WTC11 (cell line): ENCODE measurements at regions of chr12 and their contacts with region 1.

Region 1: GRCh38 chr12:118376089-118377020 is at the start of gene SUDS3:
- DNase-seq: peak; percentile 97
- ATAC-seq: peak; percentile 16
- H3K4me3 Mint-ChIP-seq: peak within 1 kb of the TSS; percentile 89
- H3K27ac Mint-ChIP-seq: peak within 1 kb of the TSS; percentile 99
- H3K4me1 Mint-ChIP-seq: peaks cover 37% of the 10 kb centered on the region
- H3K27me3 Mint-ChIP-seq: peaks cover 5% of the 10 kb centered on the region
- CTCF ChIP-seq: peak; percentile 96
- total RNA-seq, gene SUDS3: 63.9 to 65.5 TPM (median 64.7 TPM) in 3 replicates

Region 2: DNA sequence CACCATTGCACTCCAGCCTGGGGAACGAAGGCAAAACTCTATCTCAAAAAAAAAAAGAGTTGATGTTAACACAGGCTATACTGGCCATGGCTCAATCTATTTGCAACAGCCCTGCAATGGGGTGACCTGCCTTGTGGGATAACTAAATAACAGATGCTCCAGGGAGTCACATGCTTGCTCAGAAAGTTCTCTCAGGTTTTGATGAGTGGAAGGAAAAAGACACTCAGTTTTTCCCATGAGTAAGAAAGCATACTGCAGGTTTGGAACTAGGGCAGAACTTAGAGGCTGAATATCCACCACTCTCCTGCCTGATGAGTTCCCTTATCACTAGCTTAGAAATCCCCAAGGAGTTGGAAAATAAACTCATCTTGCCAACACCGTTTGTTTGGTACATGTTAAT is 332.3 kb before region 1 on chr12:
- CTCF ChIA-PET with region 1: no interaction called
- POLR2A ChIA-PET with region 1: no interaction called
- DNase-seq: no peak
- ATAC-seq: no peak
- H3K4me3 Mint-ChIP-seq: no peak overlapping the region
- H3K27ac Mint-ChIP-seq: peak overlapping the region; percentile 74; the same call in 1 of the 2 replicates
- H3K4me1 Mint-ChIP-seq: no peaks in the 10 kb centered on the region
- H3K27me3 Mint-ChIP-seq: no peaks in the 10 kb centered on the region
- CTCF ChIP-seq: no peak

Region 3: DNA sequence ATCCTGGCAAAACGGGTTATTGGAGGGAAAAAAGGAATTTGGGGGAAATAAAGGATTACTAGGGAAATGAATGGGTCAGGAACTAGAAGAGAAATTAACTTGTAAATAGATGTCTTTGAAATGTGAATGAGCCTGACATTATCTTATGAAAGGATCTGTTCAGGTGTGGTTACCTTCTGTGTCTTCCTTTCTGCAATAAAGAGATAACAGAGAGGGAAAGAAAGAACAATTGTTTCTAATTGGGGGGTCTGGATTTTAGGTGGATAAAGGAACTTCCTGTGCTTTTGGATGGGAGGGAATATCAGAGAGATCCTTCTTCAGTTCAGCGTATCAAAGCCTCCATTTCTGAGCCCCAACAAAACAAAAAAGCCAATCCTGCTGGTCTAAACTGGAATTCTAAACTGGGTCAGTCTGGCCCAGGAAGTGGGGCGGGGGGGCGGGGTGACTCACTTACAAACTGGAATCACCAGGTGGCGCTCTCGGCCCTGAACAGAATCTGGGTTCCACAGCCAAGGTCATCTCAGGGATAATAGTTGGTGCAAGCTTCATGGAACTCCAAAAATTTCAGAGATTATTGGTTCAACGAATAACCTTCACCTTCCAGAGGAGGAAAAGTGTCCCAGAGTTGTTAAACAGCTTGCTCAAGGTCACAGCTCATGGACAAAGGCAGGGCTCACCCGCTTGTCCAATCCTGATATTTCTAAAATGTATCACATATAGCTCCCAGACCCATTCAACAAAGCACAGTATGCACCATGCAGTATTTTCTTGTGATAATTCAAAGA is 255.6 kb before region 1 on chr12:
- CTCF ChIA-PET with region 1: interaction called, 70 read pairs
- POLR2A ChIA-PET with region 1: interaction called, 3 read pairs
- DNase-seq: peak; percentile 81
- ATAC-seq: peak; percentile 82
- H3K4me3 Mint-ChIP-seq: peak overlapping the region; percentile 48
- H3K27ac Mint-ChIP-seq: peak overlapping the region; percentile 100
- H3K4me1 Mint-ChIP-seq: peaks cover 43% of the 10 kb centered on the region
- H3K27me3 Mint-ChIP-seq: no peaks in the 10 kb centered on the region
- CTCF ChIP-seq: peak; percentile 77

Region 4: GRCh38 chr12:118164798-118165486 is 211.4 kb before region 1 on chr12:
- CTCF ChIA-PET with region 1: interaction called, 43 read pairs
- POLR2A ChIA-PET with region 1: no interaction called
- DNase-seq: peak; percentile 59
- ATAC-seq: peak; percentile 81
- H3K4me3 Mint-ChIP-seq: no peak overlapping the region
- H3K27ac Mint-ChIP-seq: peak overlapping the region; percentile 67; the same call in 1 of the 2 replicates
- H3K4me1 Mint-ChIP-seq: peaks cover 4% of the 10 kb centered on the region; the same call in 1 of the 2 replicates
- H3K27me3 Mint-ChIP-seq: no peaks in the 10 kb centered on the region
- CTCF ChIP-seq: peak; percentile 36

Region 5: DNA sequence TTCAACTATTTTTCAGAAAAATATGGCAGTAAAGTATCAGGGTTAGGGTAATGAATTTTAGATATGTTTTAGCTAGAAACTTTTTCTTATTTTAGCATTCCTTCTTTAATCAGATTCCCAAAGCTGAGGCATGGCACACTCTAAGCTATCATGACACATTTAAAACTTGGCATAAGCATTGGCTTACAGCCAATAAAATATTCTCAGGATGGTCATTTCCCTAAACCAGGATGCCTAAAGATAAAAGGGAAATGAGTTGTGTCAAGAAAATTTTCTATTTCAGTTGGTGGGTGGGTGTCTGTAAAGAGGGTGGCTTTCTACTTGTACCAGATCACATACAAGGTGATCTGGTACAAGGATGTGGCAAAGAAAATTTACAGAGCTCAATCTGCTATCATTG is 192.7 kb before region 1 on chr12:
- CTCF ChIA-PET with region 1: interaction called, 76 read pairs
- POLR2A ChIA-PET with region 1: interaction called, 3 read pairs
- DNase-seq: no peak
- ATAC-seq: no peak
- H3K4me3 Mint-ChIP-seq: no peak overlapping the region
- H3K27ac Mint-ChIP-seq: no peak overlapping the region
- H3K4me1 Mint-ChIP-seq: peaks cover 15% of the 10 kb centered on the region
- H3K27me3 Mint-ChIP-seq: no peaks in the 10 kb centered on the region
- CTCF ChIP-seq: no peak

Region 6: GRCh38 chr12:118391424-118391823 is 15.1 kb after region 1 on chr12:
- CTCF ChIA-PET with region 1: interaction called, 21 read pairs
- POLR2A ChIA-PET with region 1: no interaction called
- DNase-seq: no peak
- ATAC-seq: no peak
- H3K4me3 Mint-ChIP-seq: no peak overlapping the region
- H3K27ac Mint-ChIP-seq: no peak overlapping the region
- H3K4me1 Mint-ChIP-seq: no peaks in the 10 kb centered on the region
- H3K27me3 Mint-ChIP-seq: no peaks in the 10 kb centered on the region
- CTCF ChIP-seq: no peak

Region 7: GRCh38 chr12:118429688-118430383 is 53.5 kb after region 1 on chr12:
- CTCF ChIA-PET with region 1: no interaction called
- POLR2A ChIA-PET with region 1: no interaction called
- DNase-seq: no peak
- ATAC-seq: no peak
- H3K4me3 Mint-ChIP-seq: no peak overlapping the region
- H3K27ac Mint-ChIP-seq: no peak overlapping the region
- H3K4me1 Mint-ChIP-seq: peaks cover 23% of the 10 kb centered on the region
- H3K27me3 Mint-ChIP-seq: no peaks in the 10 kb centered on the region
- CTCF ChIP-seq: no peak